CD8-positive, alpha-beta memory T cell (primary cell): ENCODE measurements at regions of chr19 and their contacts with region 1.

Region 1: DNA sequence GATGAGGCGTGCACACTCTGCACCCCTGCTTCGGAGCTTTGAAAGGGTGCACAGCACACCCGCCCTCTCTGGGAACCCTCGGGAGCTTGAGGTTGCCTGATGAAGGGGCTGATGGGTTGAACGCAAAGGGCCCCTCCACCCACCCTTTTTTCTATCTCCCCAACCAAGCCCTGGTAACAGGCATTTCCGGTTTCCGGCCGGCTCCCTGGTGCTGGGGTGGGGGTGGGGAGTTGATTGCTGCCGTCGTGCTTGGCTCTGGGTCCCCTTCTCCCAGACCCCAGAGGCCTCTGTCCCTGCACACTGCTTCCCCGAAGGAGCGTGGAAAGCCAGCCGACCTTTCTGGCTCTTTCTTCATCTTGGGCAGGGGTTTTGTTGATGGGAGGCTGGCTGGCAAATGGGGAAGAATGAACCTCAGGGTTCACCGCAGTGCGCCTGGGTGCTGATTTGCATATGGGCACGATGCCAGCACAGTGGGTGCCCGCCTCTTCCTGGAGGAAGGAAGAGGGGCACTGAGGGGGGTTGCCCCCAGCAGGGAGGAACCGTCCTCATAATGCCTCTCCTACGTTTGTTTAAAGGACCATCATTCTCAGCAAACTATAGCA is 29.1 kb downstream of the VAV1 start:
- DNase-seq: peak; percentile 71 to 91 (median 84)
- H3K4me3 ChIP-seq: peak overlapping the region; percentile 68
- H3K4me3 Mint-ChIP-seq: peak overlapping the region; percentile 84 to 93 (median 89)
- H3K27ac ChIP-seq: peak overlapping the region; percentile 68
- H3K27ac Mint-ChIP-seq: peak overlapping the region; percentile 94 to 99 (median 97)
- H3K4me1 ChIP-seq: peaks cover 50% of the 10 kb centered on the region
- H3K4me1 Mint-ChIP-seq: peaks cover 49 to 67% (median 63%) of the 10 kb centered on the region in 3 donors
- H3K27me3 ChIP-seq: no peaks in the 10 kb centered on the region
- H3K27me3 Mint-ChIP-seq: no peaks in the 10 kb centered on the region

Region 2: DNA sequence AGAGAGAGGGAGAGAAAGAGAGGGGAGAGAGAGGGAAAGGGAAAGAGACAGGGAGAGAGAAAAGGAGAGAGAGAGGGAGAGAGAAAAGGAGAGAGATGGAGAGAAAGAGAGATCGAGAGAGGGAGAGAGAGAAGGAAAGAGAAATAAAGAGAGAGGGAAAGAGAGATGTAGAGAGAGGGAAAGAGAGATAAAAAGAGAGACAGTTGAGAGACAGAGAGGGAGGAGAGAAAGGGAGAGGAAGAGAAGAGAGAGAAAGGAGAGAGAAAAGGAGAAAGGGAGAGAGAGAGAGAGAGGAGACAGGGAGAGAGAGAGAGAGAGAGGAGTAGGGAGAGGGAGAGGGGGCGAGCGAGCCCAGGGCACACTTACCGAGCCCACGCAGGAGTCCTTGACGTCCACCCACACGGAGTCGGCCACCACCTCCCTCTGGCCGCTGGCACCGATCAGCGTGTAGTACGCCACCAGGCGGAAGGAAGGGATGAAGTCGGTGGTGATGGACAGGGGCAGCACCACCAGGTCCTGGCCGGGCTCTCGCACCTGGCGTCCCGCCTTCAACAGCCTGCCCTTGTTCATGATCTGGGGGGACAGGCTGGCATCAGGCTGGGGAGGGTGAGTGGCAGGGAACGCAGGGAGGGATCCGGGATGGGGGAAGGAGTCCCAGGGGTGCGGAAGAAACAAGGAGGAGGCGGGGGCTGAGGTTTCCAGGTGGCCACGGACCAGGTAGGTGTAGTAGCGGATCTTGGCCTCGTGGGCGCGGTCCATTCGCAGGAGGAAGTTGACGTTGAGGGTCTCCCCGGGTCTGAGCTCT is 91.1 kb before region 1 on chr19:
- CTCF ChIA-PET with region 1: no interaction called
- POLR2A ChIA-PET with region 1: no interaction called
- DNase-seq: no peak
- H3K4me3 ChIP-seq: no peak overlapping the region
- H3K4me3 Mint-ChIP-seq: peak overlapping the region in 4 of 7 donors; percentile 7 to 58 (median 20)
- H3K27ac ChIP-seq: no peak overlapping the region
- H3K27ac Mint-ChIP-seq: peak overlapping the region in 4 of 8 donors; percentile 30 to 83 (median 51)
- H3K4me1 ChIP-seq: no peaks in the 10 kb centered on the region
- H3K4me1 Mint-ChIP-seq: peaks cover 13 to 15% (median 14%) of the 10 kb centered on the region in 3 donors
- H3K27me3 ChIP-seq: peaks cover 10% of the 10 kb centered on the region
- H3K27me3 Mint-ChIP-seq: peaks cover 17 to 27% of the 10 kb centered on the region in 2 donors

Region 3: DNA sequence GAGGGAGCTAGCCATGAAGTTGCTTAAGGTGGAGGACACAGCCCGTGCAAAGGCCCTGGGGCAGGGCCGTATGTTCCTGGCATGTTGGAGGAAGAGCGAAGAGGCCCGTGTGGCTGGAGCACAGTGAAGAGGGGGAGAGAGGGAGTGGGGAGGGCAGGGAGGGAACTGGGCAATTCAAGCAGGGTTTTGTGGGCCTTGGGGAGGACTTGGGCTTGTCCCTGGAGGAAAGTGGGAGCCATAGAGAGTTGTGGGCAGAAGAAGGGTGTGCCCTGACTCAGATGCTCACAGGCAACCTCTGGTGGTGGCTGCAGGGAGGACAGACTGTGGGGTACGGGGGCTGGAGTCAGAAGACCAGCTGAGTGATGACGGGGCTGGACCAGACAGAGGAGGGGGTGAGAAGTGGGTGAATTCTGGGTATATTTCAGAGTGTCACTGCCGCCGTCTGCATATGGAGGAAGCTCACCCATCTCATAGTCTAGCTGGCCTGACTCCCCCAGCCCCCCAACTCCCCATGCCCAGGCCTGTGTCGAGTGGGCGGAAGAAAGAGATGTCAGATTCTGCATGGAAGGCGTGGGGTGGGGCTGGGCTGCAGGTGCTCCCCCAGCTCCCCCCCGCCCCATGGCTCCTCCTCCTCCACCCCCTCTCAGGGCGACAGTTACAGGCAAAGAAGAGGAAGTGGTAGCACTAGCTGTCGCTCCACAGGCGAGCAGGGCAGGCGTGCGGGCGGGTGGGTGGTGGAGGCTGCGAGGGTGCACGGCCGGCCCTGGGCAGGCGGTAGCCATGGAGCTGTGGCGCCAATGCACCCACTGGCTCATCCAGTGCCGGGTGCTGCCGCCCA is 29.3 kb before region 1 on chr19 and contains the start of gene VAV1:
- CTCF ChIA-PET with region 1: interaction called, 10 read pairs
- POLR2A ChIA-PET with region 1: interaction called, 32 read pairs
- DNase-seq: peak; percentile 74 to 88 (median 75)
- H3K4me3 ChIP-seq: peak within 1 kb of the TSS; percentile 98
- H3K4me3 Mint-ChIP-seq: peak within 1 kb of the TSS; percentile 85 to 97 (median 92)
- H3K27ac ChIP-seq: peak within 1 kb of the TSS; percentile 93
- H3K27ac Mint-ChIP-seq: peak within 1 kb of the TSS; percentile 89 to 99 (median 98)
- H3K4me1 ChIP-seq: peaks cover 38% of the 10 kb centered on the region
- H3K4me1 Mint-ChIP-seq: peaks cover 45 to 56% (median 55%) of the 10 kb centered on the region in 3 donors
- H3K27me3 ChIP-seq: no peaks in the 10 kb centered on the region
- H3K27me3 Mint-ChIP-seq: no peaks in the 10 kb centered on the region
- total RNA-seq, gene VAV1: 51.9 to 52.9 TPM

Region 4: GRCh38 chr19:6811906-6812305 is 10.3 kb after region 1 on chr19:
- CTCF ChIA-PET with region 1: interaction called, 10 read pairs
- POLR2A ChIA-PET with region 1: interaction called, 4 read pairs
- DNase-seq: no peak
- H3K4me3 ChIP-seq: no peak overlapping the region
- H3K4me3 Mint-ChIP-seq: peak overlapping the region in 1 of 7 donors; percentile 40
- H3K27ac ChIP-seq: no peak overlapping the region
- H3K27ac Mint-ChIP-seq: peak overlapping the region; percentile 24 to 87 (median 74)
- H3K4me1 ChIP-seq: peaks cover 34% of the 10 kb centered on the region
- H3K4me1 Mint-ChIP-seq: peaks cover 66 to 84% (median 76%) of the 10 kb centered on the region in 3 donors
- H3K27me3 ChIP-seq: no peaks in the 10 kb centered on the region
- H3K27me3 Mint-ChIP-seq: no peaks in the 10 kb centered on the region

Region 5: DNA sequence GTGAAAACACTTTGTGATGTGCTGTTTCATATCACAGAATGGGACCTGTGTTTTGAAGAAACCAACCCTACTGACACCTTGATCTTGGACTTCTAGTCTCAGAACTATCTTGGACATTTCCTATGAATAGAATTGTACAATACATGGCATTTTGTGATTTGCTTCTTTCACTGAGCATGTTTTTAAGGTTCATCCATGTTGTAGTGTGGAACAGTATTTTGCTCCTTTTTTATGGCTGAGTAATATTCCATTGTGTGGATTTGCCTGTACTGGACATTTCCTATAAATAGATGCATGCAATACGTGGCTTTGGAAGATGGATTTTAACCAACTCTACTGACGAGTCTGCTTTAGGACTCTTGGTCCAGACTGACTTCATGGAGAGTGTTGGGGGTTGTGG is 17.7 kb after region 1 on chr19:
- CTCF ChIA-PET with region 1: interaction called, 10 read pairs
- POLR2A ChIA-PET with region 1: interaction called, 10 read pairs
- DNase-seq: no peak
- H3K4me3 ChIP-seq: no peak overlapping the region
- H3K4me3 Mint-ChIP-seq: no peak overlapping the region
- H3K27ac ChIP-seq: no peak overlapping the region
- H3K27ac Mint-ChIP-seq: peak overlapping the region in 4 of 8 donors; percentile 48 to 74 (median 52)
- H3K4me1 ChIP-seq: peaks cover 6% of the 10 kb centered on the region
- H3K4me1 Mint-ChIP-seq: peaks cover 22 to 35% (median 31%) of the 10 kb centered on the region in 3 donors
- H3K27me3 ChIP-seq: no peaks in the 10 kb centered on the region
- H3K27me3 Mint-ChIP-seq: no peaks in the 10 kb centered on the region

Region 6: DNA sequence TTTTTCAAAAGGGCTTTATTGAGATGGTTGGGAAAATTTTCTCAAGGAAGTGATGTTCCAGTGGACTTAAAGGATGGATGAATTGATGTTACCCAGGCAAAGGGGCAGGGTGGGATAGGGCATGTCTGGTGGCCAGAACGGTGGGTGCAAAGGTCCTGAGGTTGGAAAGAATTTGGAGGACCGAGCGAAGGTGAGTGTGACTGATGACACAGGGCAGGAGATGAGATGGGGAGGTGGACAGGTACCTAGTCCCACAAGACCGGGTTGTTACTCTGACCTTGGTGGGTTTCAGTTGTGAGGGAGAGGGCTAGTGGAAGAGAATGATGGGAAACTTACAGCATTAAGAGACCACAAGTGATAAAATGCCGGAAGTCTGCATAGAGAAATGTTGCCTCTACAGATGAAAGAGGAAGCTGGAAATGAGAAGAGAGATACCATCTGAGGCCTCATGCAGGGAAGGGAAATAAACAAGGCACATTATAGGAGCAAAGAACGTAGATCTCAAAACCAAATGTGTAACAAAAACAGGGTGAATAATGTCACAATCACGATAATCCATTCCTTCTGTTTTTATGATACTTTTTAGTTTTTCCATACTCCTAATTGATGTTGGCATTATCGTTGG is 90.3 kb after region 1 on chr19:
- CTCF ChIA-PET with region 1: no interaction called
- POLR2A ChIA-PET with region 1: no interaction called
- DNase-seq: peak in 1 of 5 donors; percentile 59
- H3K4me3 ChIP-seq: peak overlapping the region; percentile 35
- H3K4me3 Mint-ChIP-seq: peak overlapping the region in 6 of 7 donors; percentile 42 to 76 (median 56)
- H3K27ac ChIP-seq: no peak overlapping the region
- H3K27ac Mint-ChIP-seq: peak overlapping the region; percentile 29 to 97 (median 85)
- H3K4me1 ChIP-seq: peaks cover 80% of the 10 kb centered on the region
- H3K4me1 Mint-ChIP-seq: peaks cover 55 to 81% (median 75%) of the 10 kb centered on the region in 3 donors
- H3K27me3 ChIP-seq: no peaks in the 10 kb centered on the region
- H3K27me3 Mint-ChIP-seq: peaks cover 3 to 14% of the 10 kb centered on the region in 2 donors